ENCODE measurements at regions of chr17 and their contacts with region 1.

Region 1: DNA sequence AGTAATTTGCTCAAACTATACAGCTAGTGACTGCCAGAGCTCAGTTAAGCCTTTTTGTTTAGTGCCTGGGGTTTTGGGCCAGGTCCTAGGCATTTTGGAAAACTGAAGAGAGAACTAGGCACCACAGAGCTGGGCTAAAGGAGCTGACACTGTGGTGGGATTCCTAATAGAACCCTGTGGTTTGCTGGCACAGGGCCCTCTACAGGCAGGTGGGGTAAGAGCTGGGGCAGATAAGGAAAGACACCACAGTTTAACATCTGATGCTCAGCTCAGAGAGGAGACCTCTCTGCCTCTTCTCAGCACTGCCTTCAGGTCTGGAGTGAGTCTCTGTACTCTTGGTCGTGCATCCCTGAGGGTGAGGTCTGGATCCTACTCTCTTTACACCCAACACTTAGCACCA is 121.2 kb downstream of the SNX11 start:
- DNase-seq: no peak
- ATAC-seq: no peak
- H3K4me3 ChIP-seq: no peak overlapping the region
- H3K27ac ChIP-seq: no peak overlapping the region
- H3K4me1 ChIP-seq: no peaks in the 10 kb centered on the region
- H3K27me3 ChIP-seq: no peaks in the 10 kb centered on the region
- CTCF ChIP-seq: peak in 1 of 3 experiments; percentile 28; a peak in 2 of 6 replicates
- EP300 ChIP-seq: no peak
- POLR2A ChIP-seq: no peak
- RAD21 ChIP-seq: no peak

Region 2: DNA sequence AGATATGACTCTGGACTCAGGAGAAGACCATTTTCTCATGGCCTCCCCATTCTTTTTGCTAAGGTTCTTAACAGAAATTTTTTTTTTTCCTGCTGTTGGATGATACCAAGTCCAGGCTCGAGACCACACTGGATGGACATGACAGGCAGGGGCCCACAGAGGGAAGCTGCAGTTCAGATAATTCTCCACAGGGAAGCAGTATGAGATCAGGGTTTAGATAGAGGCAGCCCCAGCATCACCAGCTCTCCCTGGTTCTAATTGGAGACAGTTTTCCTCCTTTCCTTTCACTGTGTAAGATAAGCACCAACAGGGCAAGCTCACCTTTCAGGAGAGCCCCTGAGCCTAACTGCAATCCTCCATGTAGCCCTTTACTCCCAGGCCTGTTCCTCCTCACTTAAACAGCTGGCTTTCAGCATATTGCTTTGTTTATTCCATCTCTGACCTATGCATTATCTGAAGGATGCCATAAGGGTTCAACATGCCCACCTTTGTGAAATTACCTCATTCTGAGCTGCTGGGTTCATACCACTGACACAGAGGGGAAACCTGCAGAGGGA is 13.1 kb before region 1 on chr17:
- CTCF ChIA-PET with region 1: interaction called, 12 read pairs
- POLR2A ChIA-PET with region 1: interaction called, 3 read pairs
- RAD21 ChIA-PET with region 1: interaction called, 6 read pairs
- SMC1A ChIA-PET with region 1: interaction called, 9 read pairs
- in situ Hi-C with region 1: no loop called
- intact Hi-C with region 1: no loop called
- DNase-seq: no peak
- ATAC-seq: peak; percentile 63
- H3K4me3 ChIP-seq: no peak overlapping the region
- H3K27ac ChIP-seq: no peak overlapping the region
- H3K4me1 ChIP-seq: no peaks in the 10 kb centered on the region
- H3K27me3 ChIP-seq: no peaks in the 10 kb centered on the region
- CTCF ChIP-seq: peak; percentile 25 to 53 (median 50); a peak in 5 of 6 replicates
- EP300 ChIP-seq: no peak
- POLR2A ChIP-seq: no peak
- RAD21 ChIP-seq: peak; percentile 67

Region 3: GRCh38 chr17:48241131-48241591 is 12.4 kb after region 1 on chr17:
- CTCF ChIA-PET with region 1: interaction called, 11 read pairs
- POLR2A ChIA-PET with region 1: interaction called, 5 read pairs
- RAD21 ChIA-PET with region 1: interaction called, 12 read pairs
- SMC1A ChIA-PET with region 1: interaction called, 6 read pairs
- in situ Hi-C with region 1: no loop called
- intact Hi-C with region 1: no loop called
- DNase-seq: peak; percentile 54
- ATAC-seq: peak; percentile 94
- H3K4me3 ChIP-seq: no peak overlapping the region
- H3K27ac ChIP-seq: peak overlapping the region; percentile 74
- H3K4me1 ChIP-seq: peaks cover 46% of the 10 kb centered on the region
- H3K27me3 ChIP-seq: no peaks in the 10 kb centered on the region
- CTCF ChIP-seq: no peak
- EP300 ChIP-seq: no peak; a peak in 1 of 4 replicates
- POLR2A ChIP-seq: no peak
- RAD21 ChIP-seq: no peak

Measured in GM12878 (cell line).